ENCODE measurements at regions of chr13 and their contacts with region 1.

Region 1: DNA sequence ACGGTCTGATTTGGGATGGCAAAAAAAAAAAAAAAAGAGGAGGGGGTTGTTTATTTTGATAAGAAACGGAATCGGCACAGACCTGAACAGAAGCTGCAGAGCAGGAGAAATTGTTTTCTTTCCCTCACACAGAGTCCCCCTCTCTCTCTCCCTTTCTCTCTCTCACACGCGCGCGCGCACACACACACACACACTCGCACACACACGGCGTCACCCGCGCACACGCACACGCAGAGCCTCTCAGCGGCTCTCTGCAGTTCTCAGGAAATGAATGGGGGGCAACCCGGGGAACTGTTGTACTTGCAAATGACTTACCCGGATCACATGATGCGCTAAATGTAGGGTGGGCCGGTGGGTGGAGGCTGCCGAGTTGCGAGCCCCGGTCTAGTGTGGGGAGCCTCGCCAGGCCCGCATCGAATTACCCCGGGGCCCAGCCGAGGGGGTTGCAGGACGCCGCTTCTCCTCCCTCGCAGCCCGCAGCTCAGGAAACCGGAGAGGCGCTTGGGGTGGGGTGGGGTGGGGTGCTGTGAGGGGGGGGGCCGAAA is 475 bp downstream of the KLF12 start:
- DNase-seq: peak; percentile 95
- H3K4me3 Mint-ChIP-seq: peak overlapping the region; percentile 97
- H3K27ac Mint-ChIP-seq: peak overlapping the region; percentile 99
- H3K4me1 Mint-ChIP-seq: peaks cover 34% of the 10 kb centered on the region
- H3K27me3 Mint-ChIP-seq: peaks cover 7% of the 10 kb centered on the region

Region 2: GRCh38 chr13:72781451-72782439 is 1352.0 kb before region 1 on chr13 and contains the starts of genes DIS3 and PIBF1:
- intact Hi-C with region 1: loop called (anchors 5 kb)
- DNase-seq: peak; percentile 99
- H3K4me3 Mint-ChIP-seq: peak within 1 kb of the TSS; percentile 97
- H3K27ac Mint-ChIP-seq: peak within 1 kb of the TSS; percentile 98
- H3K4me1 Mint-ChIP-seq: peaks cover 43% of the 10 kb centered on the region
- H3K27me3 Mint-ChIP-seq: no peaks in the 10 kb centered on the region
- total RNA-seq, gene DIS3: 52.1 and 55.6 TPM in 2 replicates
- total RNA-seq, gene PIBF1: 25.0 and 33.7 TPM in 2 replicates

Region 3: GRCh38 chr13:73765651-73766384 is 367.9 kb before region 1 on chr13:
- intact Hi-C with region 1: loop called (anchors 10 kb)
- DNase-seq: peak; percentile 88
- H3K4me3 Mint-ChIP-seq: peak overlapping the region; percentile 78
- H3K27ac Mint-ChIP-seq: peak overlapping the region; percentile 88
- H3K4me1 Mint-ChIP-seq: peaks cover 44% of the 10 kb centered on the region
- H3K27me3 Mint-ChIP-seq: no peaks in the 10 kb centered on the region

Region 4: DNA sequence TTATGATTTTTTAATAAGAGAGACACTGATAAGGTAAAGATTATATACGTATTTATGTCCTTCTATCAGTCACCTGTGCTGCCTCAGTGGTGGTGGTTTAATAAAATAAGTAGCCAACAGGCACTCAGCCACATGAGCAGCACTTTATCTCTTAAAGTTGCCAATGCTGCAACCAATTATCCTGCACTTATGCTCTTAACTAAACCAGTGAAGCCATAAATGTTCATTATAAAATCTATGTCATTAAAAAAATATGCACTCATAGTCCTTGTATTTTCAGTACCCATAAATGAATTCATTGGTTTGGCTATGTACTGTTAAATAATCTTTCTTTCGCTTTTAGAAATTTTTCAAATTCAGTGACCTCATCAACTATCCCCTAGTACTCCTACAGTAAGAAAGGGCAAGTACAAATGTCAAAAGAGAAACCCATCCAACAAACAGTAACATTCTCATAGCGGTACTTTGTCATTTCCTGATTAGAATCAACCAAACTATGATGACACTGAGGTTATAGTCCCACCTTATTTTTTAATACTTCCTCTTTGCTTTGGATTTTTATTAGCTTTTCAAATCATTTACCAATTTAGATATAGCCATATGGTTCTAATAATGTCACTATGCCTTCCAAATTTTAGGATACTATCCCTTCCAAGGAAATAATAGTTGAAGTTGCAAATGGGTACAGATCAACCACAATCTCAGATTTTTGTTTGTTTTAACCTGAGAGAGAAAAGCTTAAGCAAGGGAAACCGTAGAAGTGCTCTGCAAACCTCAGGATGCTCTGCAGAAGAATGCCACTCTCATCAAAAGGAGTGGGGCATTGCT is 190.4 kb before region 1 on chr13:
- intact Hi-C with region 1: loop called (anchors 5 kb)
- DNase-seq: no peak
- H3K4me3 Mint-ChIP-seq: peak overlapping the region; percentile 24
- H3K27ac Mint-ChIP-seq: peak overlapping the region; percentile 69
- H3K4me1 Mint-ChIP-seq: peaks cover 25% of the 10 kb centered on the region
- H3K27me3 Mint-ChIP-seq: no peaks in the 10 kb centered on the region

Region 5: DNA sequence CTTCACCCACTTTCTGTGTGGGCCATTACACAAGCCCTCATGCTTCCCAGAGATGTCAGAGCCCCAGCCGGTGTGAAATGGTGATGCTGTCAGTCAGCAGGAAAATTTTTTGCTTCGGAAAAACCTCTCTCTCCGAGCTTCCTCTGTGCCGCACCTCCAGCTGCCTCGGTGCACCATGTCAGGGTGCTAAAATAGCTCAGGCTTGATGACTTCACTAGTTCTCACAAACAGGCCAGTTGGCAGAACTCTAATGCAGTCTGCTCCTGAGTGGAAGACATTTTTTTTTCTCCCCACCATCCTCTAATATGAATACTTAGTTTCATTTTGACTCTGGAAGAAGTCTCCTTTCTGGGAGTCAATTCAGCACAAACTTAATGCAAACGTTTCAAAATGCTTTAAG is 70.8 kb before region 1 on chr13:
- intact Hi-C with region 1: loop called (anchors 1 kb)
- DNase-seq: peak; percentile 67
- H3K4me3 Mint-ChIP-seq: peak overlapping the region; percentile 74
- H3K27ac Mint-ChIP-seq: peak overlapping the region; percentile 88
- H3K4me1 Mint-ChIP-seq: peaks cover 62% of the 10 kb centered on the region
- H3K27me3 Mint-ChIP-seq: no peaks in the 10 kb centered on the region

Region 6: GRCh38 chr13:74246487-74246886 is 112.8 kb after region 1 on chr13:
- intact Hi-C with region 1: loop called (anchors 1 kb)
- DNase-seq: no peak
- H3K4me3 Mint-ChIP-seq: no peak overlapping the region
- H3K27ac Mint-ChIP-seq: no peak overlapping the region
- H3K4me1 Mint-ChIP-seq: peaks cover 54% of the 10 kb centered on the region
- H3K27me3 Mint-ChIP-seq: peaks cover 1% of the 10 kb centered on the region

Region 7: DNA sequence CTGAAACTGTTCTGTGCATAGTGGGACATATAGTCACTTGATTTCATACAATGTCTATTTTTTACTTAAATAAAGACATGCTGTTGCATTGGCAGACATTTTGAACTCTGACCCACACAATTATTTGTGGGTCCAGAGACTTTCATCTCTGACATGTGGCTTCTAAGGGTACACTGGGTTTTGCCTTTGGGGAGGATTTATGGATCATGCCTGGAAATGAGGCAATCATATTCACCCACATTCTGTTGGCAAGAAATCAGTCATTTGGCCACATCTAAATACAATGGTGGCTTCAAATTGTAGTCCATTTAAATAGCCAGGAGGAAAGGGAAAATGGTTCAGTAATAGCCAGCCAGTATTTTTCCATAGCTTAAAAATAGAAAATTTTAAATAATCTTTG is 238.8 kb after region 1 on chr13:
- intact Hi-C with region 1: no loop called
- DNase-seq: no peak
- H3K4me3 Mint-ChIP-seq: no peak overlapping the region
- H3K27ac Mint-ChIP-seq: no peak overlapping the region
- H3K4me1 Mint-ChIP-seq: no peaks in the 10 kb centered on the region
- H3K27me3 Mint-ChIP-seq: no peaks in the 10 kb centered on the region

Region 8: DNA sequence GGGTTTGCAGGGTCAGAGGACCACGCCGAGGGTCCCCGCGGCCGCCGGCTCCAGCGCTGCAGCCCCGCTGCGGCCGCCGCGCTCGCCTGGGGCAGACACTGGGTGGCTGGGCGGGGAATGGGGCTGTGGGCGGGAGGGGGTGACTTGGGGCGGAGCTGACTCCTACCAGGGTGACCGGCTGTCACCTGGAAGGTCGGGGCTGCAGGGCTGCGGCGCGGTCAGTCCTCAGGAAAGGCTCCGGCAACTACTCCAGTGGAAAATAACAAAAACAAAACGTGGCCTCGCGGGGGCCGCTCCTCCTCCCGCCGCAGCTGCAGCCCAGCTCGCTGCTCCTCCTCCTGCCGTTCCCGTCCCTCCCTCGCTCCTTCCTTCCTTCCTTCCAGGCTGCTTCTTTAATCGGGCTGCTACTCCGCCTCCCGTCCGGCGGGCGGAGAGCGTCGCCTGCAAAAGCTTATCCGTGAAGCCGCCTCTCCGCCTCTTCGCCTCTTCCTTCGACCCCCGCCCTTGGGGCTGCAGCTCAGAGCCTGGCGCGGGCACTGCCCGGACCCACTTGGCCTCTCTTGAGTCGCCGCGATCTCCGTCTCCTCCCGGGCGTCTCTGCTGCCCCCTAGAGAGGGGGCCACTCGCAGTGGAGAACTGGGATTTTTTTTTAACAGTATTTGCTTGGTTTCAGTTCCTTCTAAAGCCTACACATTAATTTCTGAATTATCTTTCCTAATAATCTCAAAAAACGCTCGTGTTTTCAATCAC is 1348.5 kb after region 1 on chr13 and contains the start of gene TBC1D4:
- intact Hi-C with region 1: loop called (anchors 2 kb)
- DNase-seq: peak; percentile 87
- H3K4me3 Mint-ChIP-seq: peak within 1 kb of the TSS; percentile 99
- H3K27ac Mint-ChIP-seq: peak within 1 kb of the TSS; percentile 86
- H3K4me1 Mint-ChIP-seq: peaks cover 36% of the 10 kb centered on the region
- H3K27me3 Mint-ChIP-seq: peaks cover 47% of the 10 kb centered on the region
- total RNA-seq, gene TBC1D4: 72.3 and 77.0 TPM in 2 replicates

Measured in activated CD4-positive, alpha-beta T cell treated with anti-CD3 and anti-CD28 coated beads, Interleukin-2, amount 10 ng/mL, durations not matched to agents 24 days and 14 days (primary cell).